CD4-positive, alpha-beta memory T cell (primary cell): ENCODE measurements at regions of chr2 and their contacts with region 1.

Region 1: GRCh38 chr2:105858868-105859693 is 114.4 kb downstream of the NCK2 start:
- DNase-seq: peak in 1 of 5 donors; percentile 59
- H3K4me3 ChIP-seq: peak overlapping the region; percentile 6 to 20
- H3K4me3 Mint-ChIP-seq: peak overlapping the region in 7 of 8 donors; percentile 57 to 94 (median 81)
- H3K27ac ChIP-seq: peak overlapping the region; percentile 81
- H3K27ac Mint-ChIP-seq: peak overlapping the region; percentile 92 to 99 (median 95)
- H3K4me1 ChIP-seq: peaks cover 98% of the 10 kb centered on the region
- H3K4me1 Mint-ChIP-seq: peaks cover 76 to 94% (median 86%) of the 10 kb centered on the region in 4 donors
- H3K27me3 ChIP-seq: no peaks in the 10 kb centered on the region
- H3K27me3 Mint-ChIP-seq: no peaks in the 10 kb centered on the region

Region 2: GRCh38 chr2:105718846-105719481 is 140.1 kb before region 1 on chr2:
- CTCF ChIA-PET with region 1: no interaction called
- POLR2A ChIA-PET with region 1: no interaction called
- intact Hi-C with region 1: no loop called
- DNase-seq: no peak
- H3K4me3 ChIP-seq: no peak overlapping the region
- H3K4me3 Mint-ChIP-seq: no peak overlapping the region
- H3K27ac ChIP-seq: no peak overlapping the region
- H3K27ac Mint-ChIP-seq: no peak overlapping the region
- H3K4me1 ChIP-seq: peaks cover 4% of the 10 kb centered on the region
- H3K4me1 Mint-ChIP-seq: peaks cover 0 to 4% (median 0%) of the 10 kb centered on the region in 4 donors
- H3K27me3 ChIP-seq: no peaks in the 10 kb centered on the region
- H3K27me3 Mint-ChIP-seq: peaks cover 0 to 4% of the 10 kb centered on the region in 2 donors

Region 3: GRCh38 chr2:105749583-105750400 is 109.3 kb before region 1 on chr2:
- CTCF ChIA-PET with region 1: interaction called, 5 read pairs
- POLR2A ChIA-PET with region 1: interaction called, 12 read pairs
- intact Hi-C with region 1: loop called (anchors 2 kb)
- DNase-seq: peak in 3 of 5 donors; percentile 32 to 63 (median 37)
- H3K4me3 ChIP-seq: peak overlapping the region; percentile 21 to 48
- H3K4me3 Mint-ChIP-seq: peak overlapping the region; percentile 88 to 99 (median 92)
- H3K27ac ChIP-seq: peak overlapping the region; percentile 78
- H3K27ac Mint-ChIP-seq: peak overlapping the region; percentile 92 to 99 (median 97)
- H3K4me1 ChIP-seq: peaks cover 81% of the 10 kb centered on the region
- H3K4me1 Mint-ChIP-seq: peaks cover 60 to 93% (median 75%) of the 10 kb centered on the region in 4 donors
- H3K27me3 ChIP-seq: no peaks in the 10 kb centered on the region
- H3K27me3 Mint-ChIP-seq: no peaks in the 10 kb centered on the region

Region 4: GRCh38 chr2:105834931-105835330 is 24.1 kb before region 1 on chr2:
- CTCF ChIA-PET with region 1: interaction called, 4 read pairs
- POLR2A ChIA-PET with region 1: interaction called, 13 read pairs
- intact Hi-C with region 1: loop called (anchors 2 kb)
- DNase-seq: peak in 4 of 5 donors; percentile 56 to 67 (median 62)
- H3K4me3 ChIP-seq: no peak overlapping the region
- H3K4me3 Mint-ChIP-seq: peak overlapping the region in 7 of 8 donors; percentile 20 to 70 (median 39)
- H3K27ac ChIP-seq: no peak overlapping the region
- H3K27ac Mint-ChIP-seq: peak overlapping the region; percentile 48 to 90 (median 79)
- H3K4me1 ChIP-seq: peaks cover 81% of the 10 kb centered on the region
- H3K4me1 Mint-ChIP-seq: peaks cover 53 to 86% (median 71%) of the 10 kb centered on the region in 4 donors
- H3K27me3 ChIP-seq: no peaks in the 10 kb centered on the region
- H3K27me3 Mint-ChIP-seq: no peaks in the 10 kb centered on the region

Region 5: DNA sequence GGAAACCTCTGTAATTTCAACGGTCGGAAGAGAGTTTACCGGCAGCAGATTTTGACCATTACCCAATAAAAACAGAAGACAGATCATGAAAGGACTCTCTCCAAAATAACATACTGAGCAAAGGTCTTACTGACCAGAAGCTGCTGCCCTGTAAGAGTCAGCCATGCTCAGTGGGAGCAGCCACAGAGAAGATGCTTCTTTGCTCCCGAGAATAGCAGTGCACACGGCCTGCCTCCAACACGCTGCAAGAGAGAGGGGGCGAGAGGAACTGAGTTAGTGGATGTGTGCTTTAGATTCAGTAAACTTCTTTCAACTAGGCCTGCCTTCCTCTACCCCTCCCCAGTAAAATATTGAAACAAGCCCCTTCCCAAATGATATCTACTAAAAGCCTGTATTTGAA is 10.7 kb before region 1 on chr2:
- CTCF ChIA-PET with region 1: interaction called, 4 read pairs
- POLR2A ChIA-PET with region 1: interaction called, 11 read pairs
- intact Hi-C with region 1: loop called (anchors 1 kb)
- DNase-seq: no peak
- H3K4me3 ChIP-seq: no peak overlapping the region
- H3K4me3 Mint-ChIP-seq: peak overlapping the region in 2 of 8 donors; percentile 1 to 9
- H3K27ac ChIP-seq: no peak overlapping the region
- H3K27ac Mint-ChIP-seq: peak overlapping the region in 6 of 7 donors; percentile 66 to 83 (median 76)
- H3K4me1 ChIP-seq: peaks cover 95% of the 10 kb centered on the region
- H3K4me1 Mint-ChIP-seq: peaks cover 61 to 92% (median 76%) of the 10 kb centered on the region in 4 donors
- H3K27me3 ChIP-seq: no peaks in the 10 kb centered on the region
- H3K27me3 Mint-ChIP-seq: no peaks in the 10 kb centered on the region

Region 6: GRCh38 chr2:105873721-105874120 is 14.6 kb after region 1 on chr2:
- CTCF ChIA-PET with region 1: interaction called, 5 read pairs
- POLR2A ChIA-PET with region 1: interaction called, 32 read pairs
- intact Hi-C with region 1: no loop called
- DNase-seq: peak in 2 of 5 donors; percentile 15 to 83
- H3K4me3 ChIP-seq: no peak overlapping the region
- H3K4me3 Mint-ChIP-seq: peak overlapping the region; percentile 55 to 84 (median 70)
- H3K27ac ChIP-seq: peak overlapping the region; percentile 49
- H3K27ac Mint-ChIP-seq: peak overlapping the region; percentile 88 to 94 (median 91)
- H3K4me1 ChIP-seq: peaks cover 98% of the 10 kb centered on the region
- H3K4me1 Mint-ChIP-seq: peaks cover 77 to 100% (median 90%) of the 10 kb centered on the region in 4 donors
- H3K27me3 ChIP-seq: no peaks in the 10 kb centered on the region
- H3K27me3 Mint-ChIP-seq: no peaks in the 10 kb centered on the region